Activated B cell treated with CpG ODN at 0.5 μM for 24 hours (primary cell): ENCODE measurements at regions of chr3 and their contacts with region 1.

Region 1: DNA sequence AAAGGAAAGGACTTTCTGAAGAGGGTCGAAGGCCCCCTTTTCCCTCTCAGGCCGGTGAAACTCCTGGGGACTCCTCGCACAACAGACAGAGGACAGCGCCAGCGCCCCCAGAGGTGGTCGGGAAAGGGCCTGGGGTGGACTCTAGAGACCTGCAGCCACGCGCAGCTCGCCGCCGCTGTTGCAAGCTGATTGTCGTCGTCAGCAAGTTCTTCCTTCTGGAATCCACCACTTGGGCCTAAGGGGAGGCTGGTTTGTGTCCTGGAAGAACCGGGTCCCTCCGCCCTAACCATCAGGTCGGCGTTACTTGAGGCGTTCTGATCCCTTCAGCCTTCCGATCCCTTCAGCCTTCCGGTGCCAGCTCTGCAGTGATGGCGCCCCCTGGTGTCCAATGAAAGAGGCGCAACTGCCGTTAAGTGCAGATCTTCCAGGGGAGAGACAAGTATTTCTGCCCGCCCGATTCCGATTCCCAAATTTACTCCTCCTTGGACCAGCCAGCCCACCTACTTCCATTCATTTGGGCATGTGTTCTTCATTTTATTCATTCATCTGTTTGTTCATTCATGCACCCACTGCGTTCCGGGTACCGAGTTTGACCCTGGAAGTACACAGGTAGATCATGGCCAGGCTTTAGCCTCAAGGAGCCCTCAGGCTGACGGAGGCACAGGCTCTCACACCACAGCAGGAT is 77.2 kb upstream of the SLC6A11 start:
- DNase-seq: peak; percentile 70
- ATAC-seq: peak; percentile 82
- H3K4me3 Mint-ChIP-seq: peak overlapping the region; percentile 79
- H3K27ac Mint-ChIP-seq: no peak overlapping the region
- H3K4me1 Mint-ChIP-seq: peaks cover 12% of the 10 kb centered on the region
- H3K27me3 Mint-ChIP-seq: peaks cover 40% of the 10 kb centered on the region
- CTCF ChIP-seq: peak; percentile 46

Region 2: GRCh38 chr3:8970971-8971589 is 1767.8 kb before region 1 on chr3:
- CTCF ChIA-PET with region 1: no interaction called
- POLR2A ChIA-PET with region 1: no interaction called
- intact Hi-C with region 1: loop called (anchors 2 kb)
- DNase-seq: peak; percentile 47
- ATAC-seq: peak; percentile 91
- H3K4me3 Mint-ChIP-seq: no peak overlapping the region
- H3K27ac Mint-ChIP-seq: no peak overlapping the region
- H3K4me1 Mint-ChIP-seq: peaks cover 4% of the 10 kb centered on the region
- H3K27me3 Mint-ChIP-seq: peaks cover 15% of the 10 kb centered on the region
- CTCF ChIP-seq: peak; percentile 94

Region 3: DNA sequence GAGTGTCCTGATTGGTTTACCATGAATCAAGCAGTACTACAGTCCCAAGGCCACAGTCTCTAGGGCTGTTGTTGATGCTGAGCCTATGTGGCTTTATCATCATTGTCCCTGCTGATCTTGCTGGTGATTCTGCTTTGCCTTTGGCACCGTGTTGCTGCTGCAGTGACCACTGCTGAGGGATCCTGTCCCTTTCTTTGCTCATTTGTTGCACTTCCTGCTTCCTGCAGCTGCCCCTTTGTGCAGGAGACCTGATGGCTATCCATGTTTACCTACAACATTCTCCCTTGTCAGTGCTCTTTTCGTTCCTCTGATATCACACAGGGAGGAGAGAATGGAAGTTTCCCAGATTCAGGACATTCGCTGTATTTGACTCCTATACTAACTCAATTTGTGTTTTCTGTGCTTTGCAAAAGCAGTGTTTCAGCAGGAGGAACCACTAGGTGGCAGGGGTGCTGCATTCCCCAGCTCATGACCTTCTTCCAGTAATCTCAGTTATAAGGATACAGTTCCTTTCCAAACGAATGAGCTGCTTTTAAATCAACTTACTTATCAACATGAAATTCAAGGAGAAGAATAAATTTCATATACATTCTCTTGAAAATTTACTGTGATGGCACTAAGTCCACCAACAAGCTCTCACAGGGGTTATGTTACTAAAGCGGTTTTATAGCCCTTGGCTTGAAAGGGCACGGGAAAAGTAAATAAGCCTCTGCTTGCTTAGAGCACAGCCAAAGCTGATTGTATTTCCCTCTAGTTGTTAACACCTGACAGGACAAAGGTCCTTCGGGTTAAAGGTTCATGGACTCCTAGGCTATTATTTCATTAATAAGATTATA is 1385.7 kb before region 1 on chr3:
- CTCF ChIA-PET with region 1: interaction called, 5 read pairs
- POLR2A ChIA-PET with region 1: no interaction called
- intact Hi-C with region 1: loop called (anchors 2 kb)
- DNase-seq: peak; percentile 19
- ATAC-seq: peak; percentile 53
- H3K4me3 Mint-ChIP-seq: no peak overlapping the region
- H3K27ac Mint-ChIP-seq: no peak overlapping the region
- H3K4me1 Mint-ChIP-seq: peaks cover 28% of the 10 kb centered on the region
- H3K27me3 Mint-ChIP-seq: no peaks in the 10 kb centered on the region
- CTCF ChIP-seq: peak; percentile 47

Region 4: GRCh38 chr3:9843715-9844438 is 895.0 kb before region 1 on chr3 and contains the start of gene RPUSD3:
- CTCF ChIA-PET with region 1: no interaction called
- POLR2A ChIA-PET with region 1: no interaction called
- intact Hi-C with region 1: loop called (anchors 2 kb)
- DNase-seq: peak; percentile 95
- ATAC-seq: peak; percentile 100
- H3K4me3 Mint-ChIP-seq: peak within 1 kb of the TSS; percentile 98
- H3K27ac Mint-ChIP-seq: peak within 1 kb of the TSS; percentile 86
- H3K4me1 Mint-ChIP-seq: peaks cover 20% of the 10 kb centered on the region
- H3K27me3 Mint-ChIP-seq: no peaks in the 10 kb centered on the region
- CTCF ChIP-seq: no peak
- total RNA-seq, gene RPUSD3: 49.5 and 55.7 TPM in 2 replicates

Region 5: DNA sequence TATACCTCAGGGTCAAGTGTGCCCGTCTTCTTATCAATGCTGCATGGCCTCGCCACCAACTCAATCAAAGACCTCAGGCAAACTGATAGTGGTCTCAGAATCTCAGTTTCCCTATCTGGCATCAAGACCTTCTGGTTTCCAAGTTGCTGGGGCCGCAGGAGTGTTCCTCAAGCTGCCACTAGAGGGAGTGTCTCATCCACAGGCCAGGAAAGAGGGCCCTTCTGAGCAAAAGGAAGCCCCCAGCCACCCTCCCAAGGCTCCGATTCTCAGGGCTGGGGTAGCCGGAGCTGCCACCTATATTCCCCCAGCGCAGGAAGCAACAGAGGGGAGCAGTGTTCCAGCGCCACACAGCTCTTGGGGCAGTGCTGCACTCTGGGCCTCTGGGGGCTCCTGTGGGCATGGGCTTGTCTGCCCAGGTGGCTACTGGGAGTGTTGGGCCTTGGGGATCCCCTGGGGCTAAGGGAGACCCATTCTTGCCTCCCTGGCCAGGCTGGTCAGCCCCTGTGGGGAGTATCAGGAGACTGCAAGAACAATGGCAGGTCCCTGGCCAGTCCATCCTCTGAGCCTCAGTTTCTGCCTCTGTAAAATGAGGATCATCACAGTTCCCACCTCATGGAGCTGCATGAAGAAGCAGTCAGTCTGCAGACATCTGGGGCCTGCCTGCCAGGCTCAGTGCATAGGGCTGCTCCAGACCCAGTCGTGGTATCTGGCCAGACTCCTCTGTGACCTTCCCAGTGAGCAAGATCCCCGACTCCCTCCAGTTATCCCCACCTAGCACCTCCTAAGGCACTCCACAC is 394.5 kb before region 1 on chr3:
- CTCF ChIA-PET with region 1: interaction called, 101 read pairs
- POLR2A ChIA-PET with region 1: no interaction called
- intact Hi-C with region 1: loop called (anchors 1 kb)
- DNase-seq: peak; percentile 50
- ATAC-seq: peak; percentile 61
- H3K4me3 Mint-ChIP-seq: no peak overlapping the region
- H3K27ac Mint-ChIP-seq: no peak overlapping the region
- H3K4me1 Mint-ChIP-seq: peaks cover 5% of the 10 kb centered on the region
- H3K27me3 Mint-ChIP-seq: peaks cover 2% of the 10 kb centered on the region
- CTCF ChIP-seq: peak; percentile 61

Region 6: DNA sequence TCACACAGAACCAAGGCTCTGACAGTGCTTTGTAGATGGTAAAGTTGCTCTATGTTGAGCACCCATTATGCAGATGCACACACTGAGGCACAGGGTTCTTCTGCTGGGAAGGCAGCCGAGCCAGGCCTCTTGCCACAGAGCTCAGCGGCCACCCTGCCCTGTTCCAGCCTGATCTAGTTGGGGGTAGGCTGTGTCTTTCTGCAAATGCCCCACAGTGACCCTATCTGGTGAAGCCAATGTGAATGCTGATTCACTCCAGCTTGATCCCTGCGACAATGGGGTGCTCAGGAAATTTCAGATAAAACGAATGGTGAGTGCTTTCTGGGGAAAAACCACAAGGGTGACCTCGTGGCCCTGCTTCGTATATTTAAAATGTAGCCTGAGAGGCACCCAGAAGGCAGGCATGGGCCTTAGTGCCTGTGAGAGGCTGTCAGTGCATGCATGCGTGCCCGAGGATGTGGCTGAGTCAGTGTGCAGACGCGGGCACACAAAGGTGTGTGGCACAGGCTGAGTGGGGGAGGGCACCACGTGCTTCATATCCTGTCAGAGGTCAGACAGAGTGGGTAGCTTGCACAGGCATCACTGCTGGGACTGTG is 319.1 kb before region 1 on chr3:
- CTCF ChIA-PET with region 1: interaction called, 6 read pairs
- POLR2A ChIA-PET with region 1: no interaction called
- intact Hi-C with region 1: loop called (anchors 10 kb)
- DNase-seq: no peak
- ATAC-seq: peak; percentile 94
- H3K4me3 Mint-ChIP-seq: no peak overlapping the region
- H3K27ac Mint-ChIP-seq: no peak overlapping the region
- H3K4me1 Mint-ChIP-seq: peaks cover 22% of the 10 kb centered on the region
- H3K27me3 Mint-ChIP-seq: peaks cover 11% of the 10 kb centered on the region
- CTCF ChIP-seq: no peak